Heart right ventricle (tissue), 16 donors: ENCODE measurements at regions of chr9 and their contacts with region 1.

Region 1: DNA sequence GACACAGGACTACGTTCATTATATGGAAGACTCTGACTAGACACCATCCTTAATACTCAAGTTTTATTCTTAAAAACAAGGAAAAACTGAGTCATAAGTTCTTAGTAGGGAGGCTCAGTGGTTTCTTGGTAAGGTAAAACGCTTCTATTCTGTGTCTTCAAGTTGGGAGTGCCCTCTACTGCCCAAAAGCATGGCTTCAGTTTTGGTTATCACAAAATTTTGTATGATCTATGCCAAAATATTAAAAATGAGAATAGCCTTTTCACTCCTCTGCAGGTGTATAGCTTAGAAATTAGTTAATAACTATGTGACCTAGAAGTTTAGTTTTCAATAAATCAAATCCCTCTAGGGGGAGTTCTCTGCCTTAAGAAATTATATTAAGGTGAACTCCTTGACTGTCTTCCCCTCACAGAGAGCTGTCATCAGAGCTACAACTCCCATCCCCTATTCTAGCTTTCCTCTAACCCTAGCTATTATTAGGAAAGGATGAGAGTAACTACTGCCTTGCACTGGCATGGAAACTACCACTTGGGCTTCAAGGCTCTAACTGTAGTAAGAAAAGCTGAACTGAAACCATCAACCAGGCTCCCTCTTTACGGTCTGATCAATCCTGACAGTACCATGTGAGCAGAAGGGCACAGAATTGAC is 189.7 kb downstream of the GNAQ start:
- DNase-seq: no peak
- ATAC-seq: no peak
- H3K4me3 ChIP-seq: no peak overlapping the region
- H3K27ac ChIP-seq: no peak overlapping the region
- H3K4me1 ChIP-seq: peaks cover 0 to 61% (median 26%) of the 10 kb centered on the region in 9 donors
- H3K27me3 ChIP-seq: no peaks in the 10 kb centered on the region
- CTCF ChIP-seq: peak in 6 of 9 donors; percentile 17 to 54 (median 30)

Region 2: DNA sequence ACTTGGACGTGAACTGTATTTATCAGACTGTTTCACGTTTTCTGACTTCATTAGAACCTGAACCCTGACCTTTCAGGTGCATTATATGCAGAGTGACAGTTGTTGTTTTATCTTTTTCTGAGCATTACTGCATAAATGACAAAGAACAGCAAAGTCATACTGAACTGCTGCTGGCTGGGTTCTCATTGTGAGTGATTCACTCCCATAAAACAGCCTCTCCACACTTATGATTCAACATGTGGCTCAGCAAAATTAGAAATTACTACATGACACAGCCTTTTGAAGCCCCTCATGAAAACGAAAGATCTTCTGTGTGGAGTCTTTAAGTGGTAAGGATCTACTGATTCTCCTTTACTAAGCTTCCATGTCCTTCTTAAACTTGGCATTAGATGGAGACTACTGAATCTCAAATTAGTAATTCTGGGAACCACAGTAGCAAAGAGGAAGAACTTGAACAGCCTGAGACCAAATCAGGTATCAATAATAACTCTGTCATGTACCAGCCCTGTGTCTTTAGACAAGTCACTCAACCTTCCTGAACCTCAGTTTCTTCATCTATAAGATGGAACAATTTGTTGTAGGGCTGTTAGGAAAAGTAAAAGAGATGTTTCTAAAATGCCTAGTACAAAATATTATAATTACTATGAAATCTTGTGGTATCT is 21.4 kb before region 1 on chr9:
- intact Hi-C with region 1: loop called in 1 of 10 experiments (anchors 2 kb)
- DNase-seq: no peak
- ATAC-seq: peak in 1 of 8 donors; percentile 42
- H3K4me3 ChIP-seq: no peak overlapping the region
- H3K27ac ChIP-seq: peak overlapping the region in 4 of 10 donors; percentile 3 to 55 (median 9)
- H3K4me1 ChIP-seq: peaks cover 0 to 44% (median 20%) of the 10 kb centered on the region in 9 donors
- H3K27me3 ChIP-seq: no peaks in the 10 kb centered on the region
- CTCF ChIP-seq: no peak

Region 3: DNA sequence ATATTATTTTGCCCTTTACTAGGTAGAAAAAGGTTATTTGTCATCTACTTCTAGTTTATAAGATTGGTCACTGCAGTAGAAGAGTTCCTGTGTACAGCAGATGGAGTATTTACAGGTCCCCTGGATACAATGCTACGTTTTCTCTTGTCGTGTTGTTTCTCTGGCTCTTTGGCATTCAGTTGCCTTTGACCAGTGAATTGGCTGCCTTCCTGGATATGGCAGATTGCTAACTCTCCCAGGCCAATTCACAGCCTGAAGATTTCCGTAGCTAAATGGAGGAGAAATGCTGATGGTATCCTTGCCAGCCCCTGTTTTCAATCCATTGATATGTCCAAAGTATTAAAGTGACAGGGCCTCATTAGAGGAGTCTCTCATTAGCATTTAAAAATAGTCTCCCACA is 222.2 kb after region 1 on chr9:
- intact Hi-C with region 1: no loop called
- DNase-seq: no peak
- ATAC-seq: no peak
- H3K4me3 ChIP-seq: no peak overlapping the region
- H3K27ac ChIP-seq: no peak overlapping the region
- H3K4me1 ChIP-seq: peaks cover 0 to 4% (median 0%) of the 10 kb centered on the region in 9 donors
- H3K27me3 ChIP-seq: no peaks in the 10 kb centered on the region
- CTCF ChIP-seq: no peak